Activated CD8-positive, alpha-beta T cell treated with anti-CD3 and anti-CD28 coated beads for 36 hours (primary cell): ENCODE measurements at regions of chr2 and their contacts with region 1.

Region 1: DNA sequence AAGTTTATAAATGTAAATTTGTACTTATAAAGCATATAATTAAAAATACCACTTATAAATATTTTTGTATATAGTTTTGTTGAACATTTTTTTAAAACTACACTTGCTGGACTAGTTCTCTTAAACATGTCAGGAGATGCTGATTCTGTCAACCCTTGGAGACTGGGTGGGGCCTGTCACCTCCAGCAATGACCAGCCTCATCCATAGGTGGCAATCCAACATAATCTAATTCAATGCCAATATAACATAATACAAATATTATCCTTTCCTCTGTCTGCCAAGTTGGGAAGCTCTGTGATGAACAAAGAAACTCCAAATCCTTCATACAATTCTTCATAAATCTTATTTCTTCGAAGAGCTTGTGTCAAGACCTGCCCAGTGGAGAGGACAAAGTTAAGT is 140.4 kb downstream of the RBMS1 start:
- DNase-seq: peak; percentile 52
- ATAC-seq: peak; percentile 84
- H3K4me3 Mint-ChIP-seq: no peak overlapping the region
- H3K27ac Mint-ChIP-seq: no peak overlapping the region
- H3K4me1 Mint-ChIP-seq: peaks cover 75% of the 10 kb centered on the region
- H3K27me3 Mint-ChIP-seq: no peaks in the 10 kb centered on the region
- CTCF ChIP-seq: peak; percentile 60

Region 2: DNA sequence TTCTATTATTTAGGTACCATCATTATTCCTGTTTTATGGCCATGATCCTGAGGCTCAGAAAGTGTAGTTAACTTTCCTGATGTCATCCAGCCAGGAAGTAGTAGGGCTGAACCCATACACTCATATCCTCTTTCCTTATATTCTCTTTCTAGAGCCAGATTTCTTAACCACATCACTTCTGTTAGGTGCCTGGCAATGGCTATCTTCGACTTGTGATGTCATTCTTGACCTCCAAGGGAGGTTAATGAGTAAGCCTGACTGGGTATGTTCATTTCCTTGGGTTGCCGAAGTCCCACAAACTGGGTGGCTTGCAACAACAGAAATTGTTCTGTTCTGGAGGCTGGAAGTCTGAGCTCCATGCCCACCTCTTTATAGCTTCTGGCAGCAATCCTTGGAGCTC is 196.5 kb before region 1 on chr2:
- CTCF ChIA-PET with region 1: no interaction called
- POLR2A ChIA-PET with region 1: no interaction called
- intact Hi-C with region 1: no loop called
- DNase-seq: no peak
- ATAC-seq: no peak
- H3K4me3 Mint-ChIP-seq: no peak overlapping the region
- H3K27ac Mint-ChIP-seq: no peak overlapping the region
- H3K4me1 Mint-ChIP-seq: no peaks in the 10 kb centered on the region
- H3K27me3 Mint-ChIP-seq: peaks cover 2% of the 10 kb centered on the region
- CTCF ChIP-seq: no peak

Region 3: GRCh38 chr2:160169471-160169870 is 183.7 kb before region 1 on chr2:
- CTCF ChIA-PET with region 1: no interaction called
- POLR2A ChIA-PET with region 1: no interaction called
- intact Hi-C with region 1: no loop called
- DNase-seq: no peak
- ATAC-seq: no peak
- H3K4me3 Mint-ChIP-seq: no peak overlapping the region
- H3K27ac Mint-ChIP-seq: no peak overlapping the region
- H3K4me1 Mint-ChIP-seq: no peaks in the 10 kb centered on the region
- H3K27me3 Mint-ChIP-seq: no peaks in the 10 kb centered on the region
- CTCF ChIP-seq: no peak

Region 4: GRCh38 chr2:160324161-160324800 is 28.9 kb before region 1 on chr2:
- CTCF ChIA-PET with region 1: interaction called, 13 read pairs
- POLR2A ChIA-PET with region 1: no interaction called
- intact Hi-C with region 1: no loop called
- DNase-seq: peak; percentile 74
- ATAC-seq: no peak
- H3K4me3 Mint-ChIP-seq: no peak overlapping the region
- H3K27ac Mint-ChIP-seq: no peak overlapping the region
- H3K4me1 Mint-ChIP-seq: peaks cover 81% of the 10 kb centered on the region
- H3K27me3 Mint-ChIP-seq: no peaks in the 10 kb centered on the region
- CTCF ChIP-seq: peak; percentile 77

Region 5: GRCh38 chr2:160364362-160364761 is 11.2 kb after region 1 on chr2:
- CTCF ChIA-PET with region 1: interaction called, 13 read pairs
- POLR2A ChIA-PET with region 1: no interaction called
- intact Hi-C with region 1: no loop called
- DNase-seq: no peak
- ATAC-seq: no peak
- H3K4me3 Mint-ChIP-seq: no peak overlapping the region
- H3K27ac Mint-ChIP-seq: no peak overlapping the region
- H3K4me1 Mint-ChIP-seq: peaks cover 62% of the 10 kb centered on the region
- H3K27me3 Mint-ChIP-seq: no peaks in the 10 kb centered on the region
- CTCF ChIP-seq: no peak

Region 6: GRCh38 chr2:160375802-160376469 is 22.8 kb after region 1 on chr2:
- CTCF ChIA-PET with region 1: interaction called, 10 read pairs
- POLR2A ChIA-PET with region 1: no interaction called
- intact Hi-C with region 1: no loop called
- DNase-seq: no peak
- ATAC-seq: no peak
- H3K4me3 Mint-ChIP-seq: no peak overlapping the region
- H3K27ac Mint-ChIP-seq: no peak overlapping the region
- H3K4me1 Mint-ChIP-seq: peaks cover 93% of the 10 kb centered on the region
- H3K27me3 Mint-ChIP-seq: no peaks in the 10 kb centered on the region
- CTCF ChIP-seq: no peak

Region 7: GRCh38 chr2:160533476-160533875 is 180.3 kb after region 1 on chr2:
- CTCF ChIA-PET with region 1: no interaction called
- POLR2A ChIA-PET with region 1: no interaction called
- intact Hi-C with region 1: no loop called
- DNase-seq: no peak
- ATAC-seq: no peak
- H3K4me3 Mint-ChIP-seq: no peak overlapping the region
- H3K27ac Mint-ChIP-seq: no peak overlapping the region
- H3K4me1 Mint-ChIP-seq: no peaks in the 10 kb centered on the region
- H3K27me3 Mint-ChIP-seq: no peaks in the 10 kb centered on the region
- CTCF ChIP-seq: no peak